A549 (cell line): ENCODE measurements at regions of chr19 and their contacts with region 1.

Region 1: DNA sequence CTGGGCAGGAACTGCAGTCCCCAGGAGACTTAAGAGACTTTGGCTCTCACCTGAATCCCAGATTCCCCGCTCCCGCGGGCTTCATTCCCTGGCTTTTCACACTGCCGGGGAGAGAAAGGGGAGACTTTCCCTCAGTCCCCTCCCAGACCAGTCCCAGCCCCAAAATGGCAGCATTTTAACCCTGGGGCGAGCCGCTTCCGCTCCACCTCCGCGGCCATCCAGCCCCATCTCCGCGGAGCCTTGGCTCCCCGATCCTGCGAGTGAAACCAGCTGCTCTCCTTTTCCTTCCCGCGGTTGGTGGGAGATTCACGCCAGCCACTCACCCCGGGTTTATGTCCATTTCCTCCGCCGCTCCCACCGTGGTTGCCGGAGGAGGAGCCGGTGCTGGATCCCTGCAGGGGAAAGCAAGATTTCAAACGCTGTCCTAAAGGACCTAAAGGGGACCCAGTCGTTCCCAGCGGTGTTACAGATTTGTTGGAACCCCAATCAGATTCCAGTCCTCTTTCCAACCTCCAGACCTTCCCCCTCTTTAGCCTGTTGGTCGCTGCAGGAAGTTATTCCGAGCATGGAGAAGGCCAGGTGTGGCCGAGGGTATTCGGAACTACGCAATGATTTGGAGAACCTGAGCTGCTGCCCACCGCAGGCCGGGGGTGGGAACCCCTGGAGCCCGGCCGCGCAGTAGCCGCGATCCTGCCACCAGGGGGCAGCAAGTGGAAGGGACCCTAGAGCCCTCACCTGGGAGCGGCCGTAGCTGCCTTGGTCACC is 3.4 kb downstream of the DMKN start:
- DNase-seq: peak; percentile 73 to 99
- ATAC-seq: peak; percentile 68 to 90
- H3K4me3 ChIP-seq: peak overlapping the region; percentile 48
- H3K27ac ChIP-seq: peak overlapping the region; percentile 57 to 80
- H3K4me1 ChIP-seq: peaks cover 16% of the 10 kb centered on the region
- CTCF ChIP-seq: peak; percentile 100
- EP300 ChIP-seq: no peak
- POLR2A ChIP-seq: no peak; the same call in 1 of the 2 replicates
- RAD21 ChIP-seq: peak; percentile 70 to 81

Region 2: GRCh38 chr19:35363001-35363590 is 146.9 kb before region 1 on chr19:
- CTCF ChIA-PET with region 1: interaction called, 14 read pairs
- POLR2A ChIA-PET with region 1: no interaction called
- DNase-seq: no peak
- ATAC-seq: peak in 1 of 2 experiments; percentile 9; a peak in 3 of 6 replicates
- H3K4me3 ChIP-seq: no peak overlapping the region
- H3K27ac ChIP-seq: no peak overlapping the region
- H3K4me1 ChIP-seq: no peaks in the 10 kb centered on the region
- CTCF ChIP-seq: no peak
- EP300 ChIP-seq: no peak
- POLR2A ChIP-seq: no peak
- RAD21 ChIP-seq: no peak

Region 3: DNA sequence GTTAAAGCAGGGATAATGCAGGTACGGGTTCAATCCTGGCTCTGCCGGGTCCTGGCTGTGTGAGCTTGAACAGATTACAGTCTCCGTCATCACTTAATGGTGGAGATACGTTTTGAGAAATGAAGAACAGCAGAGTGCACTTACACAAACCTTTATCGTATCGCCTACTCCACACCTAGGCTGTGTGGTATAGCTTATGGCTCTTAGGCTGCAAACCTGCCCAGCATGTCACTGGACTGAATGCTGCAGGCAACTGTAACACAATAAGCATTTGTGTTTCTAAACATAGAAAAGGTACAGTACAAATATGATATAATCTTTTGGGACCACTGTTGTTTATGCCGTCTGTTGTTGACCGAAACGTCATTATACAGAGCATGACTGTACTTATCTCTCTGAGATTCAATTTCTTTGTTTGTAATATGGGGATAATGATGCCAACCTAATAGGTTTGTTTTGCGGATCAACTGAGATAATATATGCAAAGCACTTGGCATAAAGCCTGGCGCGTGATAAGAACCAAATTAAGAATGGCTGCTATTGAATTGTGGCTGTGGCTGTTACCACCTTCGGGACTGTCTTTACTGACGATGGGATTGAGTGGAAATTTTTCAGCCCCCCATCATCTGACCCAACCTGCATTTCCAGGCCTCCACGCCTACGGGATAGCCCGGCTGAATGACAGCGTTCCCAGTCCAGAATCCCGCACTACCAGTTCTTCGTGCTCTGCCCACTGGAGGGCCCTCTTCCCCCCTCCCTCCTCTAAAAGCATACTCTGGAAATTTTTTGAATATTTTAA is 31.0 kb before region 1 on chr19:
- CTCF ChIA-PET with region 1: interaction called, 10 read pairs
- POLR2A ChIA-PET with region 1: no interaction called
- DNase-seq: no peak
- ATAC-seq: 0 out of 6 replicates have a peak, but pooled peaks of 1 of the 2 experiments have one; percentile 36
- H3K4me3 ChIP-seq: no peak overlapping the region
- H3K27ac ChIP-seq: no peak overlapping the region
- H3K4me1 ChIP-seq: no peaks in the 10 kb centered on the region
- CTCF ChIP-seq: no peak
- EP300 ChIP-seq: no peak
- POLR2A ChIP-seq: no peak
- RAD21 ChIP-seq: no peak

Region 4: GRCh38 chr19:35528218-35529038 is 18.4 kb after region 1 on chr19 and contains the start of gene SBSN:
- CTCF ChIA-PET with region 1: interaction called, 80 read pairs
- POLR2A ChIA-PET with region 1: interaction called, 4 read pairs
- DNase-seq: no peak
- ATAC-seq: no peak
- H3K4me3 ChIP-seq: no peak within 1 kb of the TSS
- H3K27ac ChIP-seq: no peak within 1 kb of the TSS
- H3K4me1 ChIP-seq: peaks cover 7% of the 10 kb centered on the region; the same call in 2 of the 3 replicates
- CTCF ChIP-seq: no peak
- EP300 ChIP-seq: no peak
- POLR2A ChIP-seq: no peak
- RAD21 ChIP-seq: no peak
- polyA plus RNA-seq, gene SBSN: 0.28 TPM in 2 replicates

Region 5: DNA sequence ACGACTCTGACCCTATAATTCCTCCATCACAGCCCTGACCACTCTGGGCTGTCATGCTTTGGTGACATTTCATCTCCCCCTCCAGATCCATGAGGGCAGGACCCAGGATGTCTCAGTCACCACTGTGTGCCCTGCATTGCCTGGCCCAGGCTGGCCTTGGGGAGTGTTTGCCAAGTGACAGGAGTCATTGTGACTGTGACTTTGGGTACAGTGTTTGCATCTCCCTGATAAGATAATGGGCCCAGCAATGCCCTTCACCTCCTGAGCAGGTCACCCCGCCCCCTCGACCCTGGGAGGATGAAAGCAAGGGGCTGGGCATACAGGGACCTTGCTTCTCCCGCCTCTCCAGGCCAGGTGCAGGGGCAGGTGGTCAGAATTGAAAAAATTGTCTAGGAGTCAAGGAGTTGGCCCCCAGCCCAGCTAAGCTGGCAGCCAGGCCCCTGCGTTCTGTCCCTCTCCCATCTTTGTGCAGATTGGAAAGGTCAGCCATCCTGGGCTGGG is 59.3 kb after region 1 on chr19:
- CTCF ChIA-PET with region 1: interaction called, 15 read pairs
- POLR2A ChIA-PET with region 1: no interaction called
- DNase-seq: no peak
- ATAC-seq: no peak
- H3K4me3 ChIP-seq: no peak overlapping the region
- H3K27ac ChIP-seq: no peak overlapping the region
- H3K4me1 ChIP-seq: no peaks in the 10 kb centered on the region
- CTCF ChIP-seq: no peak
- EP300 ChIP-seq: no peak
- POLR2A ChIP-seq: no peak
- RAD21 ChIP-seq: no peak

Region 6: DNA sequence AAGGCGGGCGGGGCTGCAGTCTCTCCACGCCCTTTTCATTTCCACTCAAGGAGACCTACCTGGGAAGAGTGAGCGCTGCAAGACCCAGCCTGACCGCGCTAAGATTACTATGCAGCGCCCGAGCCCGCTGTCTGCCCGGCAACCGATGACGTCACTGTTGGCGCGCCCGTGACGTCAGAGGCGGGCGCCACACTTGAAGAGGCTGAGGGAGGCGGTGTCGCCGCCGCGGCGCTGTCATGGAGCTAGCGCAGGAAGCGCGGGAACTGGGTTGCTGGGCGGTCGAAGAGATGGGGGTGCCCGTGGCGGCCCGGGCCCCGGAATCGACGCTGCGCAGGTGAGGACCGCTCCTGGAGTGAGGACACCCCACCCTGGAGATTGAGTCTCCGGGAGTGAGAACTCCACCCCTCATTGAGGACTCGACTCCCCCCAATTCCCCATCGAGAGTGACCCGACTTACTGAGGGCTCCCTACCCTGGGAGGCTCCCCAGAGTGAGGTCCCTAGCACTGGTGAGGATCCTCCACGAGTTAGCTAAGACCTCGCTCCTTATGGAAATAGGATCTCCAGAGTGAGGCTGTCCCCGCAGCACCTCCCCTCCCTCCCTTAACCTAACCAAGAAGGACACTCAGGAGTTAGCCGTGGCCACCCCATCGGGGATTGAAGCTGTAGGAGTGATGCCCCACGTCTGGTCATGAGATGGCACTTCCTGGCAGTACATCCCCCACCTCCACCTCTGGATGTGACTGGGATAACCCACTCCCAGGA is 102.7 kb after region 1 on chr19 and contains the start of gene HAUS5:
- CTCF ChIA-PET with region 1: interaction called, 21 read pairs
- POLR2A ChIA-PET with region 1: no interaction called
- DNase-seq: peak; percentile 98 to 99
- ATAC-seq: peak; percentile 92 to 96
- H3K4me3 ChIP-seq: peak within 1 kb of the TSS; percentile 75
- H3K27ac ChIP-seq: peak within 1 kb of the TSS; percentile 72 to 87
- H3K4me1 ChIP-seq: peaks cover 9% of the 10 kb centered on the region; the same call in 2 of the 3 replicates
- CTCF ChIP-seq: no peak; the same call in 2 of the 3 replicates
- EP300 ChIP-seq: no peak
- POLR2A ChIP-seq: peak; percentile 84
- RAD21 ChIP-seq: no peak; a peak in 1 of 5 replicates
- polyA plus RNA-seq, gene HAUS5: 7.2 and 7.3 TPM in 2 replicates